ENCODE measurements at regions of chr11 and their contacts with region 1.

Region 1: GRCh38 chr11:121671283-121672168 is 218.8 kb upstream of the SORL1-AS1 start:
- DNase-seq: no peak
- ATAC-seq: peak; percentile 46 to 66 (median 56)
- H3K4me3 ChIP-seq: peak overlapping the region in 2 of 12 donors; percentile 16 to 21
- H3K27ac ChIP-seq: peak overlapping the region in 8 of 12 donors; percentile 33 to 79 (median 70)
- H3K4me1 ChIP-seq: peaks cover 0 to 38% (median 13%) of the 10 kb centered on the region in 12 donors
- H3K27me3 ChIP-seq: no peaks in the 10 kb centered on the region
- CTCF ChIP-seq: no peak
- POLR2A ChIP-seq: no peak

Region 2: DNA sequence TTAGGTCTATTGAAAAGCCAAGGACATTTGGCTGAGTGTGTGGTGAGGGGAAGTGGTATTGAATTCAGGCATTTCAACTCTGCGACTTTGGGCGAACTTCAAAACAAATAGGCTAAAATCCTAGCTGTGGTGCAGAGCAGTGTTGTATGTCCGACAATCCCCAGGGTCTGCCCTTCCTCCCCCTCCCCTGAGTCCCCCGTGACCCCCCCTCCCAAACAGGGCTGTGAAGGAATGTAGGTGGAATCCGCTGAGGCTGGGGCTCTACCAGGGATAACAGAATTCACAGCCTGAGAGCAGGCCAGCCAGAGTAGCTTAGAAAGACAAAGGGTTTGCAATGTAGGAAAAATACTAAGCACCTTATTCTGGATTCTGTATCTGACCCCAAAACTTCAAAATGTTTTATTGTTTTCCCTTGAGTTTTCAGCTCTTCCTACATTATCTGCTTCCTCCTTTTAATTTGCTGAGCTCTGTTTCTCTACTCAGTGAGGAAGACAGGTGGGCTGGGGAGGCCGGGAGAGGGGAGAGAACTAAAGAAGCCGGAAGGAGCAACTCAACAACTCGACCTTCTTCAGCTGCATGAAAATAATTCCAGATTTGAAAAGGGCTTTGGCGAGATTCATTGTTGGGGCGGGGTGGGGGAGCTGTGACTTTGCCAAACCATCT is 129.3 kb after region 1 on chr11:
- intact Hi-C with region 1: loop called in 1 of 10 experiments (anchors 10 kb)
- DNase-seq: peak in 1 of 5 donors; percentile 29
- ATAC-seq: peak in 3 of 4 donors; percentile 32 to 61 (median 44)
- H3K4me3 ChIP-seq: no peak overlapping the region
- H3K27ac ChIP-seq: peak overlapping the region in 7 of 12 donors; percentile 2 to 71 (median 47)
- H3K4me1 ChIP-seq: peaks cover 0 to 15% (median 3%) of the 10 kb centered on the region in 12 donors
- H3K27me3 ChIP-seq: no peaks in the 10 kb centered on the region
- CTCF ChIP-seq: no peak
- POLR2A ChIP-seq: no peak

Measured in heart left ventricle (tissue), 16 donors.